ENCODE measurements at regions of chr7 and their contacts with region 1.

Region 1: GRCh38 chr7:95871078-95871782 is 98.9 kb downstream of the DYNC1I1 start:
- DNase-seq: peak; percentile 67
- H3K4me3 ChIP-seq: no peak overlapping the region
- H3K27ac ChIP-seq: no peak overlapping the region
- H3K4me1 ChIP-seq: no peaks in the 10 kb centered on the region; a peak in 1 of 4 replicates
- H3K27me3 ChIP-seq: no peaks in the 10 kb centered on the region
- CTCF ChIP-seq: peak; percentile 91
- EP300 ChIP-seq: no peak
- RAD21 ChIP-seq: peak; percentile 91

Region 2: DNA sequence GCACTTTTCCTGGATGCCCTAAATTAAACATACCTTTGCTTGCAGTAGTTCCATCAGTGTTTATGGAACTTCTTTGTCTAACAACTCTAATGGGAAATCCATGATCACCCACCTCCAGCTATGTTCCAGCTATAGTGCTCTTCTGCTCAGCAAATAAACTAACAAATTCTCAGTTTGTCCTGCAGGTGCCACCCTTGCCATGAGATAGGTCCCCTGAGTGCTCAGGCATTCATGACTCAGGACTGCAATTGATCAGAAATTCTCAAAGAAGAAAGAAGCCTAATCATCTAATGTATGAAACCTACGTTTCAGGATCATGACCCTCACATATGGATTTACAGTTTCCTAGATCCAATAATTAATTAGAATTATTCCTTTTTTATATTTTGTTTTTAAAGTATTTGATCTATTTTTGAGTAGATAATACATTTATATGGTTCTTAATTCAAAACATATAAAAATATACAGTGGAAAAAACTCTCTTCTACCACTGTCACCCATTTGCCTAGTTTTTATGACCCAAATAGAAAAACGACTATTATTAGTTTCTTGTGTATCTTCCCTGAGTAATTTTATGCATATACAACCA is 147.5 kb before region 1 on chr7:
- CTCF ChIA-PET with region 1: interaction called, 191 read pairs
- POLR2A ChIA-PET with region 1: no interaction called
- DNase-seq: peak; percentile 72
- H3K4me3 ChIP-seq: no peak overlapping the region
- H3K27ac ChIP-seq: no peak overlapping the region
- H3K4me1 ChIP-seq: no peaks in the 10 kb centered on the region
- H3K27me3 ChIP-seq: no peaks in the 10 kb centered on the region; the same call in 1 of the 2 replicates
- CTCF ChIP-seq: peak; percentile 59
- EP300 ChIP-seq: no peak
- RAD21 ChIP-seq: peak; percentile 96

Region 3: GRCh38 chr7:95737828-95738505 is 133.3 kb before region 1 on chr7:
- CTCF ChIA-PET with region 1: interaction called, 18 read pairs
- POLR2A ChIA-PET with region 1: no interaction called
- DNase-seq: no peak
- H3K4me3 ChIP-seq: no peak overlapping the region
- H3K27ac ChIP-seq: no peak overlapping the region
- H3K4me1 ChIP-seq: no peaks in the 10 kb centered on the region
- H3K27me3 ChIP-seq: 0 out of 2 replicates have a peak, but pooled peaks cover 4% of the 10 kb centered on the region
- CTCF ChIP-seq: no peak
- EP300 ChIP-seq: no peak
- RAD21 ChIP-seq: no peak

Region 4: GRCh38 chr7:95794917-95795515 is 76.2 kb before region 1 on chr7:
- CTCF ChIA-PET with region 1: interaction called, 26 read pairs
- POLR2A ChIA-PET with region 1: no interaction called
- DNase-seq: peak; percentile 26
- H3K4me3 ChIP-seq: no peak overlapping the region; a peak in 1 of 4 replicates
- H3K27ac ChIP-seq: no peak overlapping the region
- H3K4me1 ChIP-seq: no peaks in the 10 kb centered on the region
- H3K27me3 ChIP-seq: no peaks in the 10 kb centered on the region
- CTCF ChIP-seq: peak; percentile 60; the same call in 1 of the 2 replicates
- EP300 ChIP-seq: no peak
- RAD21 ChIP-seq: peak; percentile 31

Region 5: GRCh38 chr7:95859434-95859833 is 11.8 kb before region 1 on chr7:
- CTCF ChIA-PET with region 1: interaction called, 19 read pairs
- POLR2A ChIA-PET with region 1: no interaction called
- DNase-seq: peak; percentile 50
- H3K4me3 ChIP-seq: no peak overlapping the region
- H3K27ac ChIP-seq: no peak overlapping the region; a peak in 1 of 4 replicates
- H3K4me1 ChIP-seq: no peaks in the 10 kb centered on the region; a peak in 2 of 4 replicates
- H3K27me3 ChIP-seq: no peaks in the 10 kb centered on the region
- CTCF ChIP-seq: no peak
- EP300 ChIP-seq: no peak
- RAD21 ChIP-seq: no peak

Region 6: DNA sequence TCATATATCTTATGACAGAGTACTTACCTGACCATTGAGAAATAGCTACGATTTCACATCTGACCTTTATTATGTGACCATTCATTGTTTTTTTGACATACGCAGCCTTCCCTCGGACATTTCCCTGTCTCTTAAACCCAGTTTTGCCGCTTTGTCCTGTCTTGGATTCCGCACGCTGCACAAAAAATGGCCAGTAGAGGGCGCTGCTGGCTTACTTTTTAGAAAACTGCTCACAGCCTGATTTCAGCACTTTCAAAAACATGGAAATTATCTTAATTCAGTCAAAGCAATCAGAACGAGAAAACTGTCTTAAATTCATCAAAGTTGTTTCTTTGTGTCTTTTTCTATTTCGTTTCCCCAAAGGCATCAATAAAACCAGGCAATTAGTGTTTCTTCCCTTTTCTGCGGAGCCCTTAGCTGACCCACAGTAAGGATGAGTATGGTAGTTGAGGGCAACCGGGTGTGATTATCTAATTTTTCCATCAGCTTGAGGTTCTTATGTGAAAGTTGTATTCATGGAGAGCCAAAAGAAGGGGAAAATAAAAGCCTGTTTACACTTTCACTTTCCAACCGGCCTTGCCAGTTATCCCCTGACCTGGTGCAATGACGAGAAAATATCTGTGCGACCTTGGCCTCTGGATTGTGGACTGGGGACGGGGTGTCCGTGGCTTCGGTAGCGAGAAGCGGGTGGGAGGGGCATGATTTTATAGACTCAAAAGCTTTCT is 45.5 kb after region 1 on chr7:
- CTCF ChIA-PET with region 1: interaction called, 15 read pairs
- POLR2A ChIA-PET with region 1: no interaction called
- DNase-seq: peak; percentile 57
- H3K4me3 ChIP-seq: peak overlapping the region; percentile 6 to 14; a peak in 2 of 4 replicates
- H3K27ac ChIP-seq: no peak overlapping the region
- H3K4me1 ChIP-seq: no peaks in the 10 kb centered on the region
- H3K27me3 ChIP-seq: no peaks in the 10 kb centered on the region
- CTCF ChIP-seq: peak; percentile 100
- EP300 ChIP-seq: no peak
- RAD21 ChIP-seq: peak; percentile 99

Measured in SK-N-SH (cell line).